AG04450 (cell line): ENCODE measurements at regions of chr1 and their contacts with region 1.

Region 1: DNA sequence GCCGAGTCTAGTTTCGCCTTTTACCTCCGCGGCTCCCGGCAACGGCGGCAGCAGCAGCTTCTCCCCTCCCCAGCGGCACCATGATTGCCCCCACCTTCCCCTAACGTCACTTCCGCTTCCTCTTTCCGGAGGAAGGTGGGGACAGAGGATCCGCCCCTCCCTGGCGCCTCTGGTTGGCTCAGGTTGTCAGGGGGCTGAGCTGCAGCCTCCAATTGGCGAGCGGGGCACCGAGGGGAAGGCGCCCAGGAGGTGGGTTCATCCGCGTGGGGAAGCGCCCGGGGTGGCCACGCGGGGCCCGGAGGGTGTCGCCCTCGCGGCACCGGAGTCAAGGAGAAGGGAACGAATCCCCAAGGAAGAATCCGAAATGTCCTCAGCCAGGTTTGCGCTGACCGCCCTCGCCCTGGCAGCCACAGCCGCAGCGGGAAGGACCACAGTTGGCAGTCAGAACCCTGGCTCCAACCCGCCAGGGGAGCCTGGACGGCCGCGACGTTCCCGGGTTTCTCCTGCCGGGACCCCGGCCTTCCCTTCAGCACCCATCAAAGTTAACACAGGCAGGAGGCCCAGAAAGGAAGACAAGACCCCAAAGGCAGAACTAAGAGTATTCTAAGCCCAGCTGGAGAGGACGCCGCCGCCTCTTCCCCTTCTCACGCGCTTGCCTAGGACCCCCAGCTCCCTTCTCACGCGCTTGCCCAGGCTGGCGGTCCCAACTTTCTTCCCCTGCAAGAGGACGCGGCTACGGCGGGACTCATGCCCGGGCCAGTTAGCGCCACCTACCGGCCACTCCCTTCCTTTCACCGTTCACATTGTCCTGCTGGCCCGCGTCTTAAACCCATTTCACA is at the start of gene MTF1:
- DNase-seq: peak; percentile 87
- H3K4me3 ChIP-seq: peak within 1 kb of the TSS; percentile 100
- H3K27ac ChIP-seq: peak within 1 kb of the TSS; percentile 86
- H3K27me3 ChIP-seq: no peaks in the 10 kb centered on the region
- CTCF ChIP-seq: peak; percentile 89
- polyA plus RNA-seq, gene MTF1: 6.8 and 8.6 TPM in 2 replicates

Region 2: DNA sequence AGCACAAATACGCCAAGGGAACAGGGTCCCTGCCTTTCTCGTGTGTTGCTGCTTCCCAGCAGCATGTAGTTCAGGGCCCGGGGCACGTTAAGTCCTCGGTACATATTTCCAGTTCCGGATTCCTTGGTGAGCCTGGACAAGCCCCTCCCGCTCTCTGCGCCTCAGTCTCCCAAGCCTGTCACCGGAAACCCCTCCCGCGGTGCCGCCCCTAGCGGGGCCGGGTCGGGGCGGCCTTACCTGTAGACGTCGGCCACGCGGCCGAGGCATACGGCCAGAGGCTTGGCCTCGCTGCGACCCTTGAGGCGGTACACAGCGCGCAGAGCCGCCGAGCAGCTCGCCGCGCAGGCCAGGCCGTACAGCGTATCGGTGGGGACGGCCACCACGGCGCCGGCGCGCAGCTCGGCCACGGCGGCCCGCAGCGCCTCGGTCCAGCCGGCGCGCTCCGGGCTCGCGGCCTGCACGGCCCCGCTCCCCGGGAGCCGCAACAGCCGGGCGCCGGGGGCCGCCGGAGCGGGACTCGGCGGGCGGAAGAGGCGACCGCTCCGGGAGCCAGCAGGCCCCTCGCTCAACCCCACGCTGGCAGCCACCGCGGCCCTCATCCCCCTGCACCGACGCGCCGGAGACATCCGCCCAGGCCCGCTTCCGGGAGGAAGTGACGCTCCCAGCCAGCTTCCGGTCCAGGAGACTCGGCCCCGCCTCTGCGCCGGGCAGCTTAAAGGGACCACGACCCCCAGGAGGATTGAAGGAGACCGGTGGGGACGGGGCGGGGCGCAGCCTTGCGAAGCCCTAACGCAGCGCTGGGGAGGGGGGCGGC is 52.0 kb before region 1 on chr1 and contains the starts of genes C1orf122 and YRDC:
- CTCF ChIA-PET with region 1: interaction called, 21 read pairs
- POLR2A ChIA-PET with region 1: interaction called, 22 read pairs
- DNase-seq: peak; percentile 71
- H3K4me3 ChIP-seq: peak within 1 kb of the TSS; percentile 87
- H3K27ac ChIP-seq: peak within 1 kb of the TSS; percentile 77
- H3K27me3 ChIP-seq: no peaks in the 10 kb centered on the region
- CTCF ChIP-seq: no peak
- polyA plus RNA-seq, gene C1orf122: 26.0 and 30.3 TPM in 2 replicates
- polyA plus RNA-seq, gene YRDC: 15.2 and 15.6 TPM in 2 replicates

Region 3: GRCh38 chr1:37828410-37829074 is 31.2 kb before region 1 on chr1:
- CTCF ChIA-PET with region 1: interaction called, 25 read pairs
- POLR2A ChIA-PET with region 1: interaction called, 3 read pairs
- DNase-seq: no peak
- H3K4me3 ChIP-seq: no peak overlapping the region
- H3K27ac ChIP-seq: no peak overlapping the region
- H3K27me3 ChIP-seq: no peaks in the 10 kb centered on the region
- CTCF ChIP-seq: no peak

Region 4: GRCh38 chr1:37875834-37876233 is 16.1 kb after region 1 on chr1:
- CTCF ChIA-PET with region 1: interaction called, 70 read pairs
- POLR2A ChIA-PET with region 1: interaction called, 7 read pairs
- DNase-seq: no peak
- H3K4me3 ChIP-seq: no peak overlapping the region
- H3K27ac ChIP-seq: no peak overlapping the region
- H3K27me3 ChIP-seq: no peaks in the 10 kb centered on the region
- CTCF ChIP-seq: peak; percentile 18

Region 5: DNA sequence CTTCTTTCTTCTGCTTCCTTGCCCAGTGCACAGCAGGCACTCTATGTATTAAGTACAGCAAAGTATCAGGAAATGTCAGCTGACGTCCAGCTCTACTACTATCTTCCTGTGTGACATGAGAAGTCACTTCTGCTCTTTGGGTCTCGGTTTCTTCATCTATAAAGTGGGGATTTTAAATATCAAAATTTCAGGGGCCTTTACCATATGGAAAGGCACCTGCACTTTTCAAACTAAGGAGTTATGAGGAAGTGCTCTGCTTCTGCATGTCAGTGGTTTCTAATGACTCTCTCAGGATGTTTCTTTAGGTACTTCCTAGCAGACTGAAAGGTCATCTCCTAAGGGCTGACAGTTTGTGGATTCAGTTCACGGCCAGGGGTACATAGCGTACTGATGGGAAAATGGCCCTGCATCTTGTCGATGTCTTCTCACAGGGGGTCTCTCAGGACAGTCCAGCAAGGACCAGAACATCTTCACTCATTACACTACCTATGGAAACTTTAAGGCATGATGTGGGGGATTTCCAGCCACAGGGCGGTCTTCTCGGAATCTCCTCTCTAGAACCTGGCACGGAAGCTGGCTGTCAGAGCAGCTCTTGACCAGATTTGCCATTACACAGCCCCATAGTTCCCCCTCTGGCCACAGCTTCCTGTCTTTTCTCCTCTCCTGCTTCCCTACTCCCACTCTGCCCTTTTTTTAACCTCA is 41.6 kb after region 1 on chr1:
- CTCF ChIA-PET with region 1: interaction called, 14 read pairs
- POLR2A ChIA-PET with region 1: no interaction called
- DNase-seq: no peak
- H3K4me3 ChIP-seq: no peak overlapping the region
- H3K27ac ChIP-seq: no peak overlapping the region
- H3K27me3 ChIP-seq: no peaks in the 10 kb centered on the region
- CTCF ChIP-seq: no peak

Region 6: GRCh38 chr1:37978541-37978940 is 118.8 kb after region 1 on chr1:
- CTCF ChIA-PET with region 1: interaction called, 14 read pairs
- POLR2A ChIA-PET with region 1: no interaction called
- DNase-seq: no peak
- H3K4me3 ChIP-seq: no peak overlapping the region
- H3K27ac ChIP-seq: no peak overlapping the region
- H3K27me3 ChIP-seq: no peaks in the 10 kb centered on the region
- CTCF ChIP-seq: no peak